WTC11 (cell line): ENCODE measurements at regions of chr3 and their contacts with region 1.

Region 1: DNA sequence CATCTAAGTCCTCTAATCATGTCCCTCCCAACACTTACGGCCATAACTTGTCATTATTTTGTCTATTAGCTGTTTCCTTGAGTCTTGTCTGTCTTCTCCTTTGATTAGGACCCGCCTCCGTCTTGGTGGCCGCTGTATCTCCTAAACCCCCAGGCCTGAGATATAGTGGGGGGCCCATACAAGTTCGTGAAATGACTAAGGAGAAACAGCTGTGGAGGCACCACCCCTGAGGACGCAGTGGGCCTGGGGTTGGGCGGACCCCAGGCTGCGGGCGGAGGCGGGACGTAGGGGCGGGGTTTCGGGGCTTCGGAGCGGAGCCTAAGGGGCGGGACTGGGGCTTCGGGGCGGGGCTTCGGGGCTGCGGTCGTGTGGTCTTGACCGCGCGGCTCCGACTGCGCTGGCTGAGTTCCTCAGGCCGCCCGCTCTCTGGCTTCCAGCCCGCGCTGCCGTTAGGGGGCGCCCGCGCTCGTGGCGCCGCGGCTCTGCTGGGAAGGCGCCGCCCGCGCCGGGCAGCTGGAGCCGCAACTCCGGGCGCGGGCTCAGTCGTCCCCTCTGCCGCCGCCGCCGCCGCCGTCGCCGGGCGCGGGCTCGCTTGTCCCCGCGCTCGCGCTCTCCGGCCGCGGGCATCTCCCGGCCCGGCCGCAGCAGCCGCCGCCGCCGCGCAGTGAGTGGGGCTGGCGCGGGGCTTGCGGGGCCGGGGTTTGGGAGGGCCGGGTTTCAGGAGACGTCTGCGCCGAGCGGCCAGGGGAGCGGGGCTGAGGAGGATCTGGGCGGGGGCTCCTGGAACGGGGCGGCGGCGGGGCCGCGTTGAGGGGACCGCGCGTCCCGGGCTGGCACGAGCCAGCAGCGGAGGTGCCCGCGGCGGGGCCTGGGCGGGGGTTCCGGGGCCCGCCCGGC is at the start of gene KCTD6:
- DNase-seq: peak; percentile 97
- ATAC-seq: peak; percentile 97
- H3K4me3 Mint-ChIP-seq: peak within 1 kb of the TSS; percentile 89
- H3K27ac Mint-ChIP-seq: peak within 1 kb of the TSS; percentile 86
- H3K4me1 Mint-ChIP-seq: peaks cover 63% of the 10 kb centered on the region
- H3K27me3 Mint-ChIP-seq: peaks cover 12% of the 10 kb centered on the region
- CTCF ChIP-seq: peak; percentile 66
- total RNA-seq, gene KCTD6: 15.2 to 16.4 TPM (median 15.5 TPM) in 3 replicates

Region 2: DNA sequence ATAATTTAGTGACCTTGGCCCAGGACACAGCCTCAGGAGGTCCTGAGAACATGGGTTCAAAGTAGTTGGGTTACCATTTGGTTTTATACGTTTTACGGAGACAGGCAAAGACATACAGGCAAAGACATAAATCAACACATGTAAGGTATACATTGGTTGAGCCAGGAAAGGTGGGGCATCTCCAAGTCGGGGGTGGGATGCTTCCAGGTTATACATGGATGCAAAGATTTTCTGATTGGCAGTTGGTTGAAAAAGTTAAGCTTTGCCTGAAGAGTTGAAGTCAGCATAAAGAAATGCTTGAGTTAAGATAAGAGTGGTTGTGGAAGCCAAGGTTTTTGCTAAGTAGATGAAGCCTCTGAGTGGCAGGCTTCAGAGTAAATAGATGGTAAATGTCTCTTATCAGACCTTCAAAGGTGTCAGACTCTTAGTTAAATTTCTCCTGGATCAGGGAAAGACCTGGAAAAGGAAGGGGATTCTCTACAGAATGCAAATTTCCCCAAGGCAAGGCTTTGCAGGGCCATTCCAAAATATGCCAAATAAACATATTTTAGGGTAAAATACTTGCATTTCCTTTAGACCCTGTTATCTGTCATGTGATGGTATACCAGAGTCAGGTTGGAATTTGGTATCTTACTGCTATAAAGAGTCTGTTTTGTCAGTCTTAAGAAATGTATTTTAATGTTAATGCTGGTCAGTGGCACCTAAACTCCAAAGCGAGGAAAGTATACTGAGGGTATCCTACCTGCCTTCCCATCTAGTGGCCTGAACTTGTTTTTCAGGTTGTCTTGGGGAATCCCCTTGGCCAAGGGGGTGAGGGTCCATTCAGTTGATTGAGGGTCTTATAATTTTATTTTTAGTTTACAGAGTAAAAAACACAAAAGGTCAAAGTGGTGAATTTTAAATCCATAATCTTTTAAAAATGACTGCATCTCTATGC is 50.0 kb before region 1 on chr3:
- CTCF ChIA-PET with region 1: interaction called, 10 read pairs
- POLR2A ChIA-PET with region 1: no interaction called
- DNase-seq: no peak
- ATAC-seq: peak; percentile 60
- H3K4me3 Mint-ChIP-seq: no peak overlapping the region
- H3K27ac Mint-ChIP-seq: peak overlapping the region; percentile 49; the same call in 1 of the 2 replicates
- H3K4me1 Mint-ChIP-seq: peaks cover 50% of the 10 kb centered on the region
- H3K27me3 Mint-ChIP-seq: no peaks in the 10 kb centered on the region
- CTCF ChIP-seq: no peak

Region 3: GRCh38 chr3:58463181-58463941 is 28.4 kb before region 1 on chr3:
- CTCF ChIA-PET with region 1: interaction called, 12 read pairs
- POLR2A ChIA-PET with region 1: no interaction called
- DNase-seq: peak; percentile 81
- ATAC-seq: peak; percentile 92
- H3K4me3 Mint-ChIP-seq: peak overlapping the region; percentile 40
- H3K27ac Mint-ChIP-seq: peak overlapping the region; percentile 93
- H3K4me1 Mint-ChIP-seq: peaks cover 13% of the 10 kb centered on the region
- H3K27me3 Mint-ChIP-seq: no peaks in the 10 kb centered on the region
- CTCF ChIP-seq: peak; percentile 66; the same call in 1 of the 2 replicates